ENCODE measurements at regions of chr2 and their contacts with region 1.

Region 1: GRCh38 chr2:105655244-105655643 is 89.5 kb upstream of the NCK2 start:
- DNase-seq: no peak
- ATAC-seq: no peak

Region 2: DNA sequence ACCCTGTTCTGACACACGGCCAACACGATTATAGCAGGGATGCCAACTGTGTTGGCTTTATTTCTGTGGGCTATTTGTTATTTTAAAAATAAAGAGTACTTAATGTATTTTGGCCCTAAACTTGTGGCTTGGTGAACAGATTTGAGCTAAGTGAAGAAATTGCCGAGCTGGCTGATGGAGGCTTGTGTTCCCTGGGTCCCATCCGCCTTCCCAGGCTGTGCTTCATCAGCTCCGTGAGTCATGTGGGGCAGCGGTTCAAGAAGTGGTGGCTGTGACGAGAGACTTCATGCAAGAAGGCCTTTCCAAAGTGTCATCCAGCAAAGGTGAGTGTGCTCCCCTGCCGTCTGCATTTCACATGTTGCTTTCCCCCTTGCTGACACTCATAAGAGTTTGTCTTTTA is 15.9 kb after region 1 on chr2:
- intact Hi-C with region 1: loop called (anchors 1 kb)
- DNase-seq: no peak
- ATAC-seq: no peak

Measured in sciatic nerve (tissue), 2 donors.